GM12878 (cell line): ENCODE measurements at regions of chr17 and their contacts with region 1.

Region 1: DNA sequence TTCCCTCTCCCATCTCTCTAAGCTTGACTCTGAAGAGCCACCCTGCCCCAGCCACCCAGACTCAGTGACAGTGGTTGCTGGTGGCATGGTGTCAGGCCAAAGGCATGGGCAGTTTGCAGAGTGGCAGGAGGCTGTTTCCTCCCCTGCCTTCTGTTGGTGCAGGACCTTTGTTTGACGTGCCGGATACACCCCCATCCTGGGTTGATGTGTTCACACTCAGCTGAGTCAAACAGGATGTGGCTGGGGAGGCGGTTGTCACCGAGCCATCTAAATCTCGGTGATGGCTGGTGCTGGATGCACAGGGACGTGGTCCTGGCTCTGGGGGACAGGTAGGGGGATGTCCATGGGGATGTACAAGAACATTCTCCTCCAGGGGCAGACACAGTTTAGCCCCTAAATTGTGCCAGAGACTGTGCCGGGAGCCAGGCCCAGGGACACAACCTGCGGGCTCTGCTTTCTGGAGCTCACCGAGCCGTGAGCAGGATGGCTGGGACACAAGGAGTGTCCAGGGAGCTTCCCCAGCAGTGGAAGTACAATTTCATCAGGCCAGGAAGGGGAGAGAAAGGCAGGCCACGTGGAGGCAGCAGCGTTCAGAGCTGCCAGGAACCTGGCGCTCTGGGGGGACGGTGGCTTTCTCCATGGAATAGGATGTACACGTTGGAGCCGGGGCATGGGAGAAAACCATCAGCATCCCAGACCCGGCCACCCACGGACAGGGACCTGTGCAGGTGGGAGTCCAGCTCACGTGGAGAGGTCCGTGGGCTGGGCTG is 264.2 kb downstream of the SEC14L1 start:
- DNase-seq: peak; percentile 60
- ATAC-seq: peak; percentile 93
- H3K4me3 ChIP-seq: peak overlapping the region; percentile 59; the same call in 1 of the 2 replicates
- H3K27ac ChIP-seq: peak overlapping the region; percentile 77
- H3K4me1 ChIP-seq: peaks cover 36% of the 10 kb centered on the region
- H3K27me3 ChIP-seq: no peaks in the 10 kb centered on the region
- CTCF ChIP-seq: peak in 1 of 3 experiments; percentile 16; a peak in 1 of 6 replicates
- EP300 ChIP-seq: peak; percentile 27 to 44; a peak in 1 of 4 replicates
- POLR2A ChIP-seq: peak; percentile 78
- RAD21 ChIP-seq: no peak

Region 2: GRCh38 chr17:77372444-77373298 is 32.3 kb before region 1 on chr17:
- CTCF ChIA-PET with region 1: interaction called, 15 read pairs
- POLR2A ChIA-PET with region 1: no interaction called
- RAD21 ChIA-PET with region 1: interaction called, 3 read pairs
- SMC1A ChIA-PET with region 1: no interaction called
- in situ Hi-C with region 1: no loop called
- intact Hi-C with region 1: no loop called
- DNase-seq: no peak
- ATAC-seq: peak; percentile 89
- H3K4me3 ChIP-seq: peak overlapping the region; percentile 58
- H3K27ac ChIP-seq: peak overlapping the region; percentile 69
- H3K4me1 ChIP-seq: peaks cover 41% of the 10 kb centered on the region
- H3K27me3 ChIP-seq: no peaks in the 10 kb centered on the region
- CTCF ChIP-seq: no peak
- EP300 ChIP-seq: no peak
- POLR2A ChIP-seq: peak; percentile 37; the same call in 1 of the 2 replicates
- RAD21 ChIP-seq: no peak

Region 3: GRCh38 chr17:77388384-77389311 is 16.3 kb before region 1 on chr17:
- CTCF ChIA-PET with region 1: interaction called, 10 read pairs
- POLR2A ChIA-PET with region 1: interaction called, 5 read pairs
- RAD21 ChIA-PET with region 1: interaction called, 5 read pairs
- SMC1A ChIA-PET with region 1: interaction called, 7 read pairs
- in situ Hi-C with region 1: no loop called
- intact Hi-C with region 1: no loop called
- DNase-seq: no peak
- ATAC-seq: no peak
- H3K4me3 ChIP-seq: peak overlapping the region; percentile 62; the same call in 1 of the 2 replicates
- H3K27ac ChIP-seq: peak overlapping the region; percentile 34
- H3K4me1 ChIP-seq: peaks cover 23% of the 10 kb centered on the region
- H3K27me3 ChIP-seq: no peaks in the 10 kb centered on the region
- CTCF ChIP-seq: no peak
- EP300 ChIP-seq: no peak
- POLR2A ChIP-seq: no peak
- RAD21 ChIP-seq: no peak

Region 4: GRCh38 chr17:77420804-77421629 is 16.0 kb after region 1 on chr17:
- CTCF ChIA-PET with region 1: interaction called, 11 read pairs
- POLR2A ChIA-PET with region 1: interaction called, 6 read pairs
- RAD21 ChIA-PET with region 1: interaction called, 3 read pairs
- SMC1A ChIA-PET with region 1: interaction called, 7 read pairs
- in situ Hi-C with region 1: no loop called
- intact Hi-C with region 1: no loop called
- DNase-seq: no peak
- ATAC-seq: peak; percentile 75
- H3K4me3 ChIP-seq: peak overlapping the region; percentile 32; the same call in 1 of the 2 replicates
- H3K27ac ChIP-seq: peak overlapping the region; percentile 23
- H3K4me1 ChIP-seq: peaks cover 28% of the 10 kb centered on the region
- H3K27me3 ChIP-seq: no peaks in the 10 kb centered on the region
- CTCF ChIP-seq: no peak
- EP300 ChIP-seq: no peak
- POLR2A ChIP-seq: no peak
- RAD21 ChIP-seq: no peak

Region 5: GRCh38 chr17:77494664-77495435 is 89.9 kb after region 1 on chr17:
- CTCF ChIA-PET with region 1: interaction called, 24 read pairs
- POLR2A ChIA-PET with region 1: no interaction called
- RAD21 ChIA-PET with region 1: interaction called, 19 read pairs
- SMC1A ChIA-PET with region 1: interaction called, 20 read pairs
- in situ Hi-C with region 1: no loop called
- intact Hi-C with region 1: loop called (anchors 1 kb)
- DNase-seq: no peak
- ATAC-seq: peak; percentile 89
- H3K4me3 ChIP-seq: no peak overlapping the region
- H3K27ac ChIP-seq: no peak overlapping the region
- H3K4me1 ChIP-seq: peaks cover 16% of the 10 kb centered on the region
- H3K27me3 ChIP-seq: no peaks in the 10 kb centered on the region
- CTCF ChIP-seq: peak; percentile 87 to 93 (median 92)
- EP300 ChIP-seq: no peak
- POLR2A ChIP-seq: peak; percentile 51; the same call in 1 of the 2 replicates
- RAD21 ChIP-seq: peak; percentile 85